Mammary epithelial cell (primary cell): ENCODE measurements at regions of chr3 and their contacts with region 1.

Region 1: DNA sequence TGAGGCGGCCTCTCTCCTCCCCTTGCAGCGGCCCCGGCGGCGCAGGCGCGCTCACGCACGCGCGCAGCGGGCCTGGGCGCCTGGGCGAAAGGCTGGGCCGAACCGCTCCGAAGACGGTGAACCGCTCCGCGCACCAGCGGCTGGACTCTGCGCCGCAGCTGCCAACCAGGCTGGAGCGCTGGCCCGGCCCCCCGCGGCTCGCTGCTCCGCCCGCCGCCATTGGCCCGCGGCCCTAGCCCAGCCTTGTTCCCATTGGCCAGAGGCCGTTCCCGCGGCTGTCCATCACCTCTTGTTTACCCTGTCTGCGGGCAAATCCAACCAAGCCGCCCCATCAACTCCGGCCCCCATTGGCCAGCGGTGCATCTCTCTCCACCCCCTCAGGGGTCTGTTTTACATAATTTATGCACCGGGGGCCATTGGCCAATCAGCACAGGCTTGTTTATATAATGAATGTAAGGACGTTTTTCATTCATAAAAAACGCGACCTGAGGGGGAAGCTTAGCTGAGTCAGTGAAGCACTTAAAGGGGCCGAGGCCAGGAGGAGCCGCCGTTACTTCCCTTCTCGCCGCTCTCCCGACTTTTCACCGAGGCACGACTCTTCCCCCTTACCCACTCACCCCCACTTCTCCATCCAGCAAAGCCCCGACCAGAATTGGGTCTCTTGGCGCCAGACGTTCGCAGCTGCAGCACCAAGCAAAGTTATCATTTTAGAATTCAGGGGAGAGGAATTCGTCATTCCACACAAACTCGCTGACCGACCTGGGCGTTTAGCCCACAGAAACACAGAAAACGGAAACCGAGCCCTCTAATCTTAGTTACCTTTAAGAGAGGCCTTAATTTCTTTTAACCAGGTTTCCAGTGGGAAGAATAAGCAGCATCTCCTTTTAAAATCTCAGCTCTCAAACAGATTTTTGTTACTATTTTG is at the start of gene ETV5:
- DNase-seq: peak; percentile 100
- H3K4me3 ChIP-seq: peak within 1 kb of the TSS; percentile 71 to 92 (median 91)
- H3K27ac ChIP-seq: peak within 1 kb of the TSS; percentile 66
- H3K4me1 ChIP-seq: peaks cover 30% of the 10 kb centered on the region
- H3K27me3 ChIP-seq: no peaks in the 10 kb centered on the region
- CTCF ChIP-seq: no peak
- total RNA-seq, gene ETV5: 69.3 to 80.3 TPM

Region 2: DNA sequence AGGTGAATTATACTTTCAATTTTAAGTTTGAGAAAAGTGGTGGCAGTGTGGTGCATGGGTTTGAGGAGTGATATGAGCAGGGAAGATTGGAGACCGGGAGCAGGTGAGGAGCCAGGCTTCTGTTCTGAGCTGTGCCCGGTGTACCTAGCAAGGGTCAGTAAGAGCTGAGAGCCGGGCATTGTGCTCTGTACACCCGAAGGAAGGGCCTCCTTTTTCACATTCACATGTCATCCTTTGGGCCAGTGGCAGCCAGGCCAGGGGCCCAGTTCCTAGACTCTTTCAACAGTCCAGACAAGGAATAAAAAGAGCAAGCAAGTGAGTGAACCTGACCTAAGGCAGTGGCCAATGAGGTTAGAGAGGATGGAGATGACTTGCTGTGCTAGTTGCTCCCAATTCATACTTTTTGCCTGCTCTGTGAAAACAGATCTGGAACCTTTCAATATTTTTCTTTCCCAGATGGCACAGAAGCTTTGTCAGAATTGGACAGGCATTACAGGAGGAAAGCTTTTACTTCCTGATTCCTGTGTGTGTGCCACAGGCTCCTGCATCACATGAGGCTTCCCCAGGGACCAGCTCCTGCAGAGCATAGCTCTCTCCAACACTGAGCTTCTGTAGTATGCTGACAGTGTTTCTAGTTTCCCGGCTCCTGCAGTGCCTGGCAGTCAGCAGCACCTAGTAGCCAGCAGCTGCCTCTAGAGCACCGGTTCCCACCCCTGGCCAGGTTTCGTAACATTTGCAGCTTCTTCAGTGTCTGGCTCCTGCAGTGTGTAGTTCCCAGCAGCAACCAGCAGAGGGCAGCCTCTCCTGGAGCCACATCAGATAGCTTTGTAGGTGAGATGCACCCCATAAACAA is 166.1 kb before region 1 on chr3:
- CTCF ChIA-PET with region 1: no interaction called
- dilution Hi-C with region 1: no loop called
- in situ Hi-C with region 1: no loop called
- intact Hi-C with region 1: loop called (anchors 2 kb)
- DNase-seq: peak; percentile 81
- H3K4me3 ChIP-seq: no peak overlapping the region
- H3K27ac ChIP-seq: no peak overlapping the region
- H3K4me1 ChIP-seq: peaks cover 21% of the 10 kb centered on the region
- H3K27me3 ChIP-seq: peaks cover 2% of the 10 kb centered on the region
- CTCF ChIP-seq: peak; percentile 97 to 99

Region 3: DNA sequence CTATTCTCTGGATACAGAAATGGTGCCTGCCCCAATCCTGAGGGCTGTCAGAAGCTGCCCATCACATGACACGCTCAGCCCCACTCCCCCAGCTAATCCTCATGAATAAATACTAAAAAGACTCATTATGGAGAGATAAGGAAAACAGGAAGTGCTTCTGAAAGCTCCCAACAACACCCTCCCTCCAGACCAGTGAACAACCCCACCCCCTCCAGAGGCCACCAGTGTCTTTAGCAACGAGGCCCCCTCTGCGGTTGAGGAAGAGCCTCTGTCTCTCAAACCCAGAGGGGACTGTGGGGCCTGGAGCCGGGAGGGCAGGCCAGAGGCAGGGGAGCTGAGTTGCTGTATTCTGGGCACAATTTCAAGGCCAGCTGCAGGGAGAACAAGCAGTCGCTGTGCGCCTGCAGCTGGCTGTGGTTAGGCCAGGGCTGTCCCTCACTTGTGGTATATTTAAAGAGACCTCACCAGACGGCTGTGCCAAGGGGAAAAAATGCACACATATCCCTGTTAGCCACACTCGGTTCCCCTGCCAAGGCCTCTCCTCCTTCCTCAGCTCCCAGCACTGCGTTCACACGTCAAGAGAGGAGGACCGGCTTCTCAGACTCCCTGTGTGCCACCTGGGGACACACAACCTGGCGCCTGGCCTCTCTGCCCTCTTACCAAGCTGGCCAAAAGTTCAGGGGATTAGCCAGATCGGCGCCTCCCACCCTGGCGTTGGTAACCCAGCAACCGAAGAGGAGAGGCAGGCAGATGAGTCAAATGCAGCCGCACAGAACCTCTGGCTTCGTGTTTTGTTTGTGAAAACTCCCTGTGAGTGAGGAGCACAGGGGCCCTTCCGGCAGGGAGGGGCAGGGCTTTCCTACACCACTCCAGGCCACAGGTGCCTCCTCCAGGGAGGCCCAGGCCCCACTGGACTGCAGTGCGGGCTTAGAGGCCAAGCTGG is 100.9 kb after region 1 on chr3:
- CTCF ChIA-PET with region 1: no interaction called
- dilution Hi-C with region 1: no loop called
- in situ Hi-C with region 1: no loop called
- intact Hi-C with region 1: loop called (anchors 5 kb)
- DNase-seq: peak; percentile 80
- H3K4me3 ChIP-seq: no peak overlapping the region
- H3K27ac ChIP-seq: peak overlapping the region; percentile 21
- H3K4me1 ChIP-seq: peaks cover 22% of the 10 kb centered on the region
- H3K27me3 ChIP-seq: no peaks in the 10 kb centered on the region
- CTCF ChIP-seq: no peak

Region 4: DNA sequence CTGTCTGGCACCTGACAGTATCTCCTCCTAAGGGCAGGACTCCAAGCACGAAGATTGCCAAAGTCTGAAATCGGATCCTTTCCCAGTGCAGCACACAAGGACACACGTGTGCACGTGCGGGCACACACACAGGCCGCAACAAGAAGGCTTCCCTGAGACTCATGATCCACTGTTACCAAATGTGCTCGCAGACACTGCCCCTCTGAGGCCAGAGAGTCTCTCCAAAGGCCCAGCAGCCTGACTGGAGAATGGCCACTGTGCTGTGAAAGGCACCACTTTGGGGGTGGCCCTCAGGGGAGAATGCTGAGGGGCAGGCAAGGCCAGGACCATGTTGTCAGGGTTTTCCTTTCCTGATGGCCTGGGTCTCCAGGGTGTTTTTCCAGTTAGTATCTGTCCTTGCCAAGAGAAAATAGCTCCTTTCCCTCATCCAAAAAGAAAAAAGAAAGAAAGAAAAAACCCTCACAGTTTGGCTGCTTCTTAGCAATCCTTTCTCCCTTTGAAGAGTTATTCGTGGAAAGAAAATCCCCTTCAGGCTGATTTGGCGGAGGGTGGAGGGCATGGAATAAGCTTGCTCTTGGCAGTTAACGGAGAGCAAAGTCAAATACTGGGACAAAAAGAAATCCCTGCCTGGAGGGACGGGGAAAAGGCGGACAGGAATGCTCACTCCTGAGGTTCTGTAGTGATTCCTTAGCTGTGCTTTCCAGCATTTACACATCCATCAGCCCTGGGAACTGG is 111.9 kb after region 1 on chr3:
- CTCF ChIA-PET with region 1: no interaction called
- dilution Hi-C with region 1: no loop called
- in situ Hi-C with region 1: no loop called
- intact Hi-C with region 1: no loop called
- DNase-seq: no peak
- H3K4me3 ChIP-seq: no peak overlapping the region
- H3K27ac ChIP-seq: no peak overlapping the region
- H3K4me1 ChIP-seq: peaks cover 6% of the 10 kb centered on the region
- H3K27me3 ChIP-seq: no peaks in the 10 kb centered on the region
- CTCF ChIP-seq: peak; percentile 15 to 40

Region 5: GRCh38 chr3:186540221-186540834 is 431.1 kb after region 1 on chr3:
- CTCF ChIA-PET with region 1: no interaction called
- dilution Hi-C with region 1: no loop called
- in situ Hi-C with region 1: no loop called
- intact Hi-C with region 1: loop called (anchors 10 kb)
- DNase-seq: peak; percentile 78
- H3K4me3 ChIP-seq: no peak overlapping the region
- H3K27ac ChIP-seq: peak overlapping the region; percentile 4
- H3K4me1 ChIP-seq: peaks cover 17% of the 10 kb centered on the region
- H3K27me3 ChIP-seq: no peaks in the 10 kb centered on the region
- CTCF ChIP-seq: peak; percentile 64 to 66

Region 6: GRCh38 chr3:186783073-186783730 is 674.0 kb after region 1 on chr3 and contains the start of gene EIF4A2:
- CTCF ChIA-PET with region 1: no interaction called
- dilution Hi-C with region 1: no loop called
- in situ Hi-C with region 1: no loop called
- intact Hi-C with region 1: loop called (anchors 10 kb)
- DNase-seq: peak; percentile 88
- H3K4me3 ChIP-seq: peak within 1 kb of the TSS; percentile 66 to 81 (median 77)
- H3K27ac ChIP-seq: peak within 1 kb of the TSS; percentile 96
- H3K4me1 ChIP-seq: peaks cover 24% of the 10 kb centered on the region
- H3K27me3 ChIP-seq: no peaks in the 10 kb centered on the region
- CTCF ChIP-seq: no peak
- total RNA-seq, gene EIF4A2: 291 to 441 TPM